ENCODE measurements at regions of chr15 and their contacts with region 1.

Region 1: GRCh38 chr15:28935326-28935725 is 49.6 kb downstream of the APBA2 start:
- DNase-seq: peak in 7 of 9 donors; percentile 22 to 50 (median 42)
- ATAC-seq: peak; percentile 55
- H3K4me3 ChIP-seq: no peak overlapping the region
- H3K4me3 Mint-ChIP-seq: peak overlapping the region in 9 of 10 donors; percentile 43 to 88 (median 76)
- H3K27ac ChIP-seq: peak overlapping the region; percentile 20
- H3K27ac Mint-ChIP-seq: peak overlapping the region in 8 of 9 donors; percentile 85 to 98 (median 96)
- H3K4me1 ChIP-seq: peaks cover 30 to 67% of the 10 kb centered on the region in 2 donors
- H3K4me1 Mint-ChIP-seq: peaks cover 20 to 85% (median 77%) of the 10 kb centered on the region in 7 donors
- H3K27me3 ChIP-seq: no peaks in the 10 kb centered on the region
- H3K27me3 Mint-ChIP-seq: peaks cover 0 to 3% (median 0%) of the 10 kb centered on the region in 5 donors

Region 2: DNA sequence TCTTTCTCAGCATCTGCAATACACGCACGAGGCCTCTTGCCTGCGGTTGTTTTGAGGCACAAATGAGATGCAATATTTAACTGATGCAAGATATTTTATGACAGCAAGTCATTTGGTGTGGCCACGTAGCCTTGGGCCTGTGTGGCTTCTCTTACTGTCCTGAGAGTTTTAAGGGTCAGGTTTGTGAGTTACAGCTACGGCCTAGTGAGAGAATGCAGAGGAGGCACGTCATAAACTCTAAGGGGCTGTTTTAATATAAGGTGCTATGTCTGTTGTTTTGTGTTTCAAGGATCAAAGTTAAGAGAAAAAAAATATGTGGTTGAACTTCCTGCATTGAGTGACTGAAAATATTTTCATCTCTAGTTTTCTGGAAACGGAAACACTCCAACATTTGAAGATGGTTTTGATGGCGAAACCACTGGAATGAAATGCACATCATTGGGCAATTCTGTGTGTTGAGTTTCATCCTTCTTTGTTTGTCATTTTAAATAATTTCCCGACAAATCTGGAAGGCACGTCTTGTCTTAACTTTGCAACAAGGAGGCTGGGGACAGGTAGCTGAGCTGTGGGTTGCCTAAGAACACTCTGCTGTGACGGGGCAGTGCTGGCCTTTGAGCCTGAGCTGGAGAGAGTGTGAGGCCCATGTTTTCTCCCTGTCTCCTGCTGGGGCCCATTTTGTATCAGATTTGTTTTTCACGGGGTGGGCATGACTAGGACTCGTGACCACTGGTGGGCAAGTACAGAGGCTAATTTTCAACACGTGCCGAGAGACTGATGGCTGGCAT is 44.4 kb before region 1 on chr15:
- CTCF ChIA-PET with region 1: interaction called, 4 read pairs
- POLR2A ChIA-PET with region 1: interaction called, 6 read pairs
- intact Hi-C with region 1: loop called in 1 of 2 experiments (anchors 2 kb)
- DNase-seq: peak in 7 of 9 donors; percentile 47 to 83 (median 81)
- ATAC-seq: peak; percentile 78
- H3K4me3 ChIP-seq: peak overlapping the region; percentile 33
- H3K4me3 Mint-ChIP-seq: peak overlapping the region; percentile 62 to 92 (median 84)
- H3K27ac ChIP-seq: peak overlapping the region; percentile 79
- H3K27ac Mint-ChIP-seq: peak overlapping the region; percentile 89 to 100 (median 98)
- H3K4me1 ChIP-seq: peaks cover 12 to 54% of the 10 kb centered on the region in 2 donors
- H3K4me1 Mint-ChIP-seq: peaks cover 46 to 84% (median 76%) of the 10 kb centered on the region in 7 donors
- H3K27me3 ChIP-seq: no peaks in the 10 kb centered on the region
- H3K27me3 Mint-ChIP-seq: peaks cover 0 to 25% (median 0%) of the 10 kb centered on the region in 5 donors

Region 3: DNA sequence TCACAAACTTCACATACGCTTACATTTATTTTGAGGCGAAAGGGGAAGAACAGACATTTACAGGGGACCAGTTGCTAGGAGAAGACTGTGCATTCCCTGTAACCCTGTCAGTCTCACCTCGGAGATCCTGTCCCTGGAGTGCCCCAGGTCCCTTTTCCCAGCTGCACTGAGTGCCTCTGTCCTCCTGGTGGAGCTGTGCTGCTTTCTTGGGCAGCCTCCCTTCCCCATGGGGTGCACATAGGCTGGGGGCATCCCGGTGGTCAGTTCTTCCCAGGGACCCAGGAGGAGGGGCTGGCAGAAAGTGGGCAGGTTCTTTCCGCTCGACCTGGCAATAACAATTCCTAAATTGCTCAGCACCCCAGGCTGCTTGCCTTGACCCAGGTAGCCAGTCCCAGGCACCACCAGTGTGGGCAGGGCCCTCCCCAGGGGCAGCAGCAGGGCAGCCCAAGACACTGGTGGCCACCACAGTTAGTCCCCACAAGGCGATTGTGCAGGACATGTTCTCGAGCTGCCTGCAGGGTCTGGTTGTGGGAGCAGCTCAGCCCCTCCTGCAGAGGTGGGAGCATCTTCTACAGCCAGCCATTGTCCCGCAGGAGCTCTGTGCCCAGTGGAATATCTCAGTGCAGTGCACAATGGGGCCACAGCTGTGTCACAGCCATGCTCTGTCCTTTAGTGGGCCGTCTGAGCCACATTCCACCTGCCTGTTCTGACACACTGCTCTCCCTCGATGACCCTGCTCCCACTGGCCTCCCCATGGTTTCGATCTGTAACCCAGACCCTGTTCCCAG is 13.2 kb before region 1 on chr15:
- CTCF ChIA-PET with region 1: interaction called, 8 read pairs
- POLR2A ChIA-PET with region 1: interaction called, 6 read pairs
- intact Hi-C with region 1: loop called in 1 of 2 experiments (anchors 2 kb)
- DNase-seq: no peak
- ATAC-seq: no peak
- H3K4me3 ChIP-seq: no peak overlapping the region
- H3K4me3 Mint-ChIP-seq: peak overlapping the region in 8 of 10 donors; percentile 37 to 94 (median 74)
- H3K27ac ChIP-seq: no peak overlapping the region
- H3K27ac Mint-ChIP-seq: peak overlapping the region in 8 of 9 donors; percentile 54 to 93 (median 79)
- H3K4me1 ChIP-seq: peaks cover 0 to 51% of the 10 kb centered on the region in 2 donors
- H3K4me1 Mint-ChIP-seq: peaks cover 27 to 91% (median 75%) of the 10 kb centered on the region in 7 donors
- H3K27me3 ChIP-seq: no peaks in the 10 kb centered on the region
- H3K27me3 Mint-ChIP-seq: peaks cover 0 to 7% (median 0%) of the 10 kb centered on the region in 5 donors

Region 4: DNA sequence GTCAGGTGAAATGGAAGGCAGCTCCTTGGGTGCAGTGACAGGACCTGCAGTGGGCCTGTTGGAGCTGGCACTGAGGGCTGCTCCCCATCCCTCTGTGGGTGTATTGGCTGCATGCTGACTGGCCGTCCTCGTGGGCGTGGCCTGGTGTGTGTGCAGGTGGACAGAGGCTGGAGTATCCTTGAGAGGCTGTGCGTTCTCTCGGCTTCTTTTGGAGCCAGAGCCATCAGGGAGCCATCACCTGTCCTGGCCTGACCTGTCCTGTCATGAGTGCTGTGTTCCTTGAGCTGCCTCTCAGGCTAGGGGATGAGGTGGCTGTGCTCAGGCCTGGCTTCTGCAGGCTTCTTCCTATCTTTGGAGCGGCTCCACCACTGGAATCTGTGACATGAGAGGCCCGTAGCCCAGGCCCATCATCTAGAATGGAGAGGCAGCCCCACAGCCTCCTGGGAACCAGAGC is 11.9 kb after region 1 on chr15:
- CTCF ChIA-PET with region 1: interaction called, 10 read pairs
- POLR2A ChIA-PET with region 1: interaction called, 13 read pairs
- intact Hi-C with region 1: loop called in 1 of 2 experiments (anchors 1 kb)
- DNase-seq: no peak
- ATAC-seq: no peak
- H3K4me3 ChIP-seq: peak overlapping the region; percentile 50
- H3K4me3 Mint-ChIP-seq: peak overlapping the region in 9 of 10 donors; percentile 47 to 89 (median 81)
- H3K27ac ChIP-seq: peak overlapping the region; percentile 62
- H3K27ac Mint-ChIP-seq: peak overlapping the region in 8 of 9 donors; percentile 87 to 99 (median 95)
- H3K4me1 ChIP-seq: peaks cover 25 to 65% of the 10 kb centered on the region in 2 donors
- H3K4me1 Mint-ChIP-seq: peaks cover 18 to 93% (median 85%) of the 10 kb centered on the region in 7 donors
- H3K27me3 ChIP-seq: no peaks in the 10 kb centered on the region
- H3K27me3 Mint-ChIP-seq: peaks cover 0 to 6% (median 0%) of the 10 kb centered on the region in 5 donors

Region 5: DNA sequence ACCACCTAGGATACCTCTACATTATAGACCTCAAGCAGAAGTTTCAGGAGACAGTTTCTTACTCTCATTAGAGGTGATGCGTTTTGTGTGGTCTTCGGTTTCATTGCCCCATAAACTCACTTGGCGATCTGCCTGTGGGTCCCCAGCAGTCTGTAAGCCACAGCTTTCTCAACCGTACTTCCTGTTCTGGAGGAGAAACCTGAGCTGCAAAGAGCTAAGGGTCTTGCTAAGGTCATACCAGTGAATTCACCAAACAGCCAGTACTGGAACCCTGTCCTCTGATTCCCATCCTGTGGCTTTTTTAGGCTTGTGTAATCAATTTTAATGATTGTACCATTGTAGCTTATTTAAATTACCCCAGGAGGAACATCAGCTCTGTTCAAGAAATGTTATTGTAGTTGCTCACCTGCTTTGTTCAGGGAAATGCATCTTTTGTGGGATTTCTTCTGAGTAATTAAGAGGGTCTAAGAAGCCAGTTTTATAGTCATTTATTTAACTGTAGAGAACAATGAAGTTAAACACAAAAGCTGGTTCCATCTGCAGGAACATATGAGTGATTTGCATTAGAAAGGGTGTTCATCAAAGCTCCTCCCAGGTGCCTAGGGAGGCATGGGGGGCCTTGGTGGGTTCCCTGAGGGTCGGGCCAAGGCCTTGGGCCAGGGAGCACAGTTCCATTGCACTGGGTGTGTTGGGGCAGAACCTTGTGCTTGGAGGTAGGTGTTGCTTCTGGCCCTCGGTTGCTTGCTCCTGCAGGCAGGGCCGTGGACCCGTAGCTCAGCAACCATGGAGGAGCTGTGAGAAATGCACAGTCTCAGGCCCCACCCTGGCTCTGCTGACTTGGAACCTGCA is 20.1 kb after region 1 on chr15:
- CTCF ChIA-PET with region 1: no interaction called
- POLR2A ChIA-PET with region 1: interaction called, 3 read pairs
- intact Hi-C with region 1: loop called in 1 of 2 experiments (anchors 2 kb)
- DNase-seq: peak in 1 of 9 donors; percentile 18
- ATAC-seq: peak; percentile 58
- H3K4me3 ChIP-seq: no peak overlapping the region
- H3K4me3 Mint-ChIP-seq: peak overlapping the region; percentile 33 to 84 (median 69)
- H3K27ac ChIP-seq: peak overlapping the region; percentile 39
- H3K27ac Mint-ChIP-seq: peak overlapping the region in 8 of 9 donors; percentile 79 to 93 (median 84)
- H3K4me1 ChIP-seq: peaks cover 22 to 36% of the 10 kb centered on the region in 2 donors
- H3K4me1 Mint-ChIP-seq: peaks cover 10 to 84% (median 75%) of the 10 kb centered on the region in 7 donors
- H3K27me3 ChIP-seq: no peaks in the 10 kb centered on the region
- H3K27me3 Mint-ChIP-seq: no peaks in the 10 kb centered on the region

Measured in naive thymus-derived CD4-positive, alpha-beta T cell (primary cell).